ENCODE measurements at regions of chr1 and their contacts with region 1.

Region 1: DNA sequence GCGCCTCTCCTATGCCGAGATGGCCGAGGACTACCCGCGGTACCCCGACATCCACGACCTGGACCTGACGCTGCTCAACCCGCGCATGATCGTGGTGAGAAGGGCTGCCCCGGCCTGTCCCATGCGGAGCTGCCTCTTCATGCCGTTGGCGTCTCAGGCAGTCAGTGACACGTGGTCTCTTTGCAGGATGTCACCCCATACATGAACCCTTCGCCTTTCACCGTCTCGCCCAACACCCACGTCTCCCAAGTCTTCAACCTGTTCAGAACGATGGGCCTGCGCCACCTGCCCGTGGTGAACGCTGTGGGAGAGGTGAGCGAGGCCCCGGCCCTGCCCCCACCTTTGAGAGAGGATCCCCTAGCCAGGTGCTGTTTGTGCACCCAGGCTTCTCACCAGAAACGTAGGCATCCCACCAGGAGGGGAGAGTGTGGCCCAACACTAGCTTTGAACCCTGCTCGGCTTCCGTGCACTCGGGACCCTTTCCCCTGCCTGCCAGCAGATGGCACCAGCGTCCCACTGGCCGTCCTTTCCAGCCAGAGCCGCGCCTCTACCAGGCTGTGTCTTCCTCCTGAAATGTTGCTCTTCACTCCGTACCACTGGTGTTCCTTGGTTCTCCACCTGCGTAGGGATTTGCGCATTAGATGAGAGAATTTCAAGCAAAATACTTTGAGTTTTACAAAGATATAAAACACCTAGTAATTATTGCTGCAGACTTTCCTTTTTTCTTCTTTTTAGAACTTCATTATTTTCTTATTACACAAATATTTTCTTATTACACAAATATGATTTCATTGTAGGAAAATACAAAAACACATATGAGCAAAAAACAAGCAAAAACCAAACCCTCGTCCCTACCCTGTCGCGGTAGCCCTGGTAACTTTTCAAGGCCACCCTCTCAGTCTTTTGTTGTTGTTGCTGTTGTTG is 9.0 kb downstream of the NPPA start:
- DNase-seq: peak; percentile 68 to 88 (median 79)
- H3K4me3 ChIP-seq: no peak overlapping the region
- H3K27ac ChIP-seq: no peak overlapping the region
- H3K4me1 ChIP-seq: peaks cover 0 to 13% of the 10 kb centered on the region in 2 donors
- H3K27me3 ChIP-seq: no peaks in the 10 kb centered on the region
- CTCF ChIP-seq: peak; percentile 91 to 99 (median 97)
- POLR2A ChIP-seq: no peak

Region 2: DNA sequence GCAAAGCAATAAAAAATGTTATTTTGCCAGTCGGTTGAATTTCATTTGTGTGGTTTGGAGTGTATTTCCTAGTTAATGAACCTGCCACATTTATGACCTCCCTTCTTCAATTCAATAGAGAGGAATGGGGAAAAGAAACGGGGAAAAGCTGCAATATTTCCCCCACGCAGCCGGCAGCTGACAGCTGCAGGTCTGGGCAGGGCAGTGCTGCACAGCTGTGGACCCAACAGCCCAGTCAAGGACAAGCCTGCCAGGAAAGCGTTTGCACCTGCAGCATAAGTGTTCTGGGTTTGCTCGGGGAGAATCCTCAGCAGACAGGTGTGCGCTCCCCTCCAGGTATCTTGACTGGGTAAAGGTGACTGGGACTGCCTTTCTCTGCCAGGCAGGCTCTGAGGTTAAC is 237.8 kb before region 1 on chr1:
- intact Hi-C with region 1: no loop called
- DNase-seq: no peak
- H3K4me3 ChIP-seq: no peak overlapping the region
- H3K27ac ChIP-seq: no peak overlapping the region
- H3K4me1 ChIP-seq: no peaks in the 10 kb centered on the region
- H3K27me3 ChIP-seq: no peaks in the 10 kb centered on the region
- CTCF ChIP-seq: no peak
- POLR2A ChIP-seq: no peak

Region 3: GRCh38 chr1:11893907-11894251 is 55.3 kb after region 1 on chr1:
- intact Hi-C with region 1: loop called (anchors 2 to 5 kb)
- DNase-seq: peak; percentile 41 to 77 (median 64)
- H3K4me3 ChIP-seq: no peak overlapping the region
- H3K27ac ChIP-seq: no peak overlapping the region
- H3K4me1 ChIP-seq: no peaks in the 10 kb centered on the region
- H3K27me3 ChIP-seq: peaks cover 11% of the 10 kb centered on the region
- CTCF ChIP-seq: peak; percentile 64 to 88 (median 82)
- POLR2A ChIP-seq: no peak

Region 4: DNA sequence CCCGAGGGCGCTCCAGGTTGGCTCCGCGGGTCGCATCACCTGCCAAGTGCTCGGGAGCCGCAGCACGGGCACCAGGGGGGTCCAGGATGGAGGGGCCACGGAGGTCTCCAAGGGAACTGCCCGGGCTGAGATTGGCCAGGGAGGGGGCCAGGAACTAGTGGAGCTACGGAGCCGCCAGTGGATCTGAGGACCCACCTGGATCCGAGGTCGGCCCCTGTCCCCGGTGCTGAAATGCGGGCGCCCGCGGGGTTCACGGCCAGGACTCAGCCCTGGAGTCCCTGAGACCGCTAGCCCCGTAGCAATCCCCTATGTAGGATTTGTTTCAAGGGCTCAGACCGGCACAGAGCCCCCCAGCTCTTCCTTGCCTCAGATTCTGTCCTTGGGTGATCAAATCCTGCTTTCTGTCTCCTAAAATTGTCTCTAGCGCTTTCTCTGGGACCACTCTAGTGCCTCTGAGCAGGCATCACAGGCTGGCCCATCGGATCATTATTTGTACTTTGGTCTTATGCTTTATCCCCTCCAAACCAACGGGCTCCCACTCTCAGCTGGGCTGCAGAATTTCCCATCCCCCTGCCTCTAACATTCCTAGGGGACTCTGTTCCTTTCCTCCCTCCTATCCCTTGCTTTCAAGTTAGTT is 60.3 kb after region 1 on chr1:
- intact Hi-C with region 1: loop called in 1 of 2 experiments (anchors 5 kb)
- DNase-seq: peak in 1 of 7 donors; percentile 29
- H3K4me3 ChIP-seq: no peak overlapping the region
- H3K27ac ChIP-seq: no peak overlapping the region
- H3K4me1 ChIP-seq: no peaks in the 10 kb centered on the region
- H3K27me3 ChIP-seq: peaks cover 27% of the 10 kb centered on the region
- CTCF ChIP-seq: no peak
- POLR2A ChIP-seq: no peak

Region 5: DNA sequence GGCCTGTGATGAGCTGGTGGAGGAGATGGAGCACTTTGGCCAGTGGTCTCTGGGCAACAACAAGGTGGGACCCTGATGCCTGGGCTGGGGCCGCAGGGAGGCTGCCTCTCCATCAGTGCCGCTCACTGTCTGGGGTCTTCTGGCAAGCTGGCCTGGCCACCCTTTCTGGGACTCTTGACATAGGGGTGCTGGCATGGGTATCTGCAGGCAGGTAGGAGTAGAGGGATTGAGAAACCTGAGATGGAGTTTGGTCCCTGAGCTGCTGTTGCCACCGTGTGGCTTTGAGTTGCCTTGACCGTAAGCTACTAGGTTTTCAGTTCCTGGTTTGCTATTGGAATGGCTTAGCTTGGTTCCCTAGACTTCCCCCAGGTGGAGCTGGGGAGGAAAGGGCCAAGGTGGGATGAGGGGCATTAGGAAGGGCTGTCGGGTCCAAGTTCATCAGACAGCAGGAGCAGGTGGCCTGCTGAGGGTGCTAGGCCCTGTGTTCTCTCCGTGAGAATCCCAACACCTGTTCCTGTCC is 128.5 kb after region 1 on chr1:
- intact Hi-C with region 1: loop called (anchors 10 kb)
- DNase-seq: peak in 6 of 7 donors; percentile 42 to 68 (median 51)
- H3K4me3 ChIP-seq: no peak overlapping the region
- H3K27ac ChIP-seq: no peak overlapping the region
- H3K4me1 ChIP-seq: no peaks in the 10 kb centered on the region
- H3K27me3 ChIP-seq: no peaks in the 10 kb centered on the region
- CTCF ChIP-seq: peak; percentile 22 to 57 (median 50)
- POLR2A ChIP-seq: no peak